ENCODE measurements at regions of chr6 and their contacts with region 1.

Region 1: DNA sequence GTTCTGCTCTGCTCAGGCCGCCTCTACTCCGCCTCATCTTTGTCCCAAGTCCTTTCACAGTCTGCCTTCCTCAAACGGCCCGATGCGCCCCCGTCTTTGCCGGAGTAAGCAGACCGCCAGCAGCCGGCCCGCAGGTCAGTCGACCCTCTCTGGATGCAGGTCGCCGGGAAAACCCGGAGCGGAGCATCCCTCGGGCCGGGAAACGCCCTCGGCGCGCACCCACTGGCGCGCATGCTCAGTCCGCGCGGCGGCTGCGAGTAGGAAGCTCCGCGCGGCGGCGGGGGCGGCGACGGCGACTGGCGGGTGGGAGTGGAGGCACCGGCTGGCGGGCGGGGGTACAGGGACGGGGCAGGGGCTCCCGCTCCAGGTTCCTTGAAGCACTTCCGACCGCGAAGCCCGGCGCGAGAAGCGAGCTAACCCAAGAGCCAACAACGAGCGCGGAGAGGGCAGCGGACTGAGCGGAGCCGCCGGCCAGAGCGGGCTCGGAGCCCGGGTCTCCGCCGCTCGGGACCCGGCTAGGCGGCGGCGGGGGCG is at the start of gene LRRC1:
- DNase-seq: peak; percentile 61 to 94 (median 76)
- ATAC-seq: peak; percentile 78
- H3K4me3 ChIP-seq: peak within 1 kb of the TSS; percentile 96
- H3K4me3 Mint-ChIP-seq: peak within 1 kb of the TSS; percentile 93 to 98 (median 96)
- H3K27ac ChIP-seq: peak within 1 kb of the TSS; percentile 43
- H3K27ac Mint-ChIP-seq: peak within 1 kb of the TSS in 8 of 9 donors; percentile 75 to 91 (median 86)
- H3K4me1 ChIP-seq: peaks cover 7 to 13% of the 10 kb centered on the region in 2 donors
- H3K4me1 Mint-ChIP-seq: peaks cover 21 to 33% (median 28%) of the 10 kb centered on the region in 7 donors
- H3K27me3 ChIP-seq: peaks cover 0 to 8% of the 10 kb centered on the region in 2 donors
- H3K27me3 Mint-ChIP-seq: peaks cover 7 to 55% (median 18%) of the 10 kb centered on the region in 5 donors
- total RNA-seq, gene LRRC1: 1.2 to 3.6 (median 3.4) TPM

Region 2: GRCh38 chr6:53064726-53065215 is 730.0 kb before region 1 on chr6:
- CTCF ChIA-PET with region 1: no interaction called
- POLR2A ChIA-PET with region 1: no interaction called
- intact Hi-C with region 1: loop called (anchors 1 to 2 kb)
- DNase-seq: peak; percentile 81 to 98 (median 94)
- ATAC-seq: peak; percentile 91
- H3K4me3 ChIP-seq: peak overlapping the region; percentile 95
- H3K4me3 Mint-ChIP-seq: peak overlapping the region; percentile 86 to 100 (median 99)
- H3K27ac ChIP-seq: peak overlapping the region; percentile 78
- H3K27ac Mint-ChIP-seq: peak overlapping the region; percentile 90 to 99 (median 97)
- H3K4me1 ChIP-seq: peaks cover 22% of the 10 kb centered on the region in 2 donors
- H3K4me1 Mint-ChIP-seq: peaks cover 36 to 68% (median 56%) of the 10 kb centered on the region in 7 donors
- H3K27me3 ChIP-seq: no peaks in the 10 kb centered on the region
- H3K27me3 Mint-ChIP-seq: no peaks in the 10 kb centered on the region

Region 3: DNA sequence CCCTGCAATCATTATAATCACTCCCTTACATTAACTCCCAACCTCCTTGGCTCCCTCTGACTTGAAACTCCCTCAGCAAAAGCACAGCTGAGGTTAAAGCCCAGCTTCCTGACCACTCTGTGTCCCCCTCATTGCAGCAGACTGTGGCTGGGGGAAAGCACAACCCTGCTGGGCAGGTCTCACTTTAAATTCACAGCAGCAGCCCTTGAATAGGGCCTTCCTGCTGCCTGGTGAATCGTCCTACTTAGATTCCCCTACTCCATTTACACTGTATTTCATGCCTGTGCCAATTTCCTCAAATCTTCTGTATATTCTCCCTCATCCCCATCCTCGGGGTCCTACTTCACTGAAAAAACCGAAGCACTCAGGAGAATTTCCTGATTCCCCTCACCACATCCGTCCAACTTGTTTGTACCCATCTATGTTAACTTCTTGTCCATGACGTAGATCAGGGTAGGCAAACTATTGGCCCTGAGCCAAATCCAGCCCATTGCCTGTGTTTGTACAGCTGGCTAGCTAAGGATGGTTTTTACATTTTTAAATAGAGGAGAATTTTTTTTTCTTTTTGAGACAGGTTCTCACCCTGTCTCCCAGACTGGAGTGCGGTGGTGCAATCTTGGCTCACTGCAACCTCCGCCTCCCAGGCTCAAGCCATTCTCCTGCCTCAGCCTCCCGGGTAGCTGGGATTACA is 614.7 kb before region 1 on chr6:
- CTCF ChIA-PET with region 1: no interaction called
- POLR2A ChIA-PET with region 1: no interaction called
- intact Hi-C with region 1: loop called in 1 of 2 experiments (anchors 10 kb)
- DNase-seq: peak in 7 of 9 donors; percentile 38 to 75 (median 64)
- ATAC-seq: peak; percentile 64
- H3K4me3 ChIP-seq: no peak overlapping the region
- H3K4me3 Mint-ChIP-seq: peak overlapping the region in 7 of 10 donors; percentile 6 to 70 (median 47)
- H3K27ac ChIP-seq: no peak overlapping the region
- H3K27ac Mint-ChIP-seq: peak overlapping the region; percentile 24 to 93 (median 85)
- H3K4me1 ChIP-seq: peaks cover 0 to 16% of the 10 kb centered on the region in 2 donors
- H3K4me1 Mint-ChIP-seq: peaks cover 4 to 37% (median 26%) of the 10 kb centered on the region in 7 donors
- H3K27me3 ChIP-seq: no peaks in the 10 kb centered on the region
- H3K27me3 Mint-ChIP-seq: no peaks in the 10 kb centered on the region

Region 4: GRCh38 chr6:53725791-53726431 is 68.9 kb before region 1 on chr6:
- CTCF ChIA-PET with region 1: no interaction called
- POLR2A ChIA-PET with region 1: no interaction called
- intact Hi-C with region 1: loop called in 1 of 2 experiments (anchors 2 kb)
- DNase-seq: peak; percentile 46 to 79 (median 63)
- ATAC-seq: peak; percentile 95
- H3K4me3 ChIP-seq: no peak overlapping the region
- H3K4me3 Mint-ChIP-seq: peak overlapping the region in 1 of 10 donors; percentile 59
- H3K27ac ChIP-seq: no peak overlapping the region
- H3K27ac Mint-ChIP-seq: peak overlapping the region in 1 of 9 donors; percentile 63
- H3K4me1 ChIP-seq: no peaks in the 10 kb centered on the region
- H3K4me1 Mint-ChIP-seq: peaks cover 0 to 14% (median 4%) of the 10 kb centered on the region in 7 donors
- H3K27me3 ChIP-seq: no peaks in the 10 kb centered on the region
- H3K27me3 Mint-ChIP-seq: peaks cover 15 to 24% (median 22%) of the 10 kb centered on the region in 5 donors

Region 5: GRCh38 chr6:53734473-53735299 is 60.1 kb before region 1 on chr6:
- CTCF ChIA-PET with region 1: no interaction called
- POLR2A ChIA-PET with region 1: no interaction called
- intact Hi-C with region 1: loop called (anchors 2 kb)
- DNase-seq: peak in 1 of 9 donors; percentile 37
- ATAC-seq: peak; percentile 36
- H3K4me3 ChIP-seq: no peak overlapping the region
- H3K4me3 Mint-ChIP-seq: peak overlapping the region in 1 of 10 donors; percentile 57
- H3K27ac ChIP-seq: no peak overlapping the region
- H3K27ac Mint-ChIP-seq: peak overlapping the region in 2 of 9 donors; percentile 9 to 14
- H3K4me1 ChIP-seq: peaks cover 15% of the 10 kb centered on the region in 2 donors
- H3K4me1 Mint-ChIP-seq: peaks cover 6 to 45% (median 11%) of the 10 kb centered on the region in 7 donors
- H3K27me3 ChIP-seq: no peaks in the 10 kb centered on the region
- H3K27me3 Mint-ChIP-seq: peaks cover 0 to 19% (median 10%) of the 10 kb centered on the region in 5 donors

Measured in naive thymus-derived CD4-positive, alpha-beta T cell (primary cell).